Activated CD4-positive, alpha-beta T cell treated with anti-CD3 and anti-CD28 coated beads, Interleukin-2, amount 10 ng/mL, durations not matched to agents 7 days and 5 days (primary cell): ENCODE measurements at regions of chr18 and their contacts with region 1.

Region 1: GRCh38 chr18:48814490-48815178 is 136.1 kb downstream of the SMAD7 start:
- DNase-seq: no peak
- H3K4me3 Mint-ChIP-seq: no peak overlapping the region
- H3K27ac Mint-ChIP-seq: peak overlapping the region; percentile 89
- H3K4me1 Mint-ChIP-seq: peaks cover 41% of the 10 kb centered on the region
- H3K27me3 Mint-ChIP-seq: no peaks in the 10 kb centered on the region

Region 2: DNA sequence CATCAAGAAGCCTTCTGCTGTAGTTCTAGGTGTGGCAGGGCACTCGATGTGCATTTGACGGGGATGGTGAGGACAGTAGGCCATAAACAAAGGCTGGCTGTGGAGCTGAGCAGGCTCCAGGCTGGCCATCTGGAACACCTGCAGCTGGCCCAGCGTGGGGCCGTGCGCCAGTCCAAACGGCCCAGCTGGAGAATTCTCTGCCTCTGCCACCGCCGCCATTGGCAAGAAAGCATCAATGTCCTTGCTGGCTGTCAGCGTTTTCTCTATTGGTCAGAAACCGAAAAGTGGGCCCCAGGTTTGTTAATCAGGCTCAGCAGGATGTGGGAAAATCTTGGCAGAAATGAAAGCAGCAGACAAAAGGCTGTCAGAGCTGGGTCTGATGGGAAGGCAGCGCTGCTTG is 299.8 kb before region 1 on chr18:
- CTCF ChIA-PET with region 1: no interaction called
- POLR2A ChIA-PET with region 1: no interaction called
- DNase-seq: no peak
- H3K4me3 Mint-ChIP-seq: no peak overlapping the region
- H3K27ac Mint-ChIP-seq: no peak overlapping the region
- H3K4me1 Mint-ChIP-seq: no peaks in the 10 kb centered on the region
- H3K27me3 Mint-ChIP-seq: peaks cover 13% of the 10 kb centered on the region

Region 3: GRCh38 chr18:48827291-48828193 is 12.9 kb after region 1 on chr18:
- CTCF ChIA-PET with region 1: interaction called, 11 read pairs
- POLR2A ChIA-PET with region 1: no interaction called
- DNase-seq: no peak
- H3K4me3 Mint-ChIP-seq: no peak overlapping the region
- H3K27ac Mint-ChIP-seq: no peak overlapping the region
- H3K4me1 Mint-ChIP-seq: peaks cover 13% of the 10 kb centered on the region
- H3K27me3 Mint-ChIP-seq: peaks cover 10% of the 10 kb centered on the region

Region 4: DNA sequence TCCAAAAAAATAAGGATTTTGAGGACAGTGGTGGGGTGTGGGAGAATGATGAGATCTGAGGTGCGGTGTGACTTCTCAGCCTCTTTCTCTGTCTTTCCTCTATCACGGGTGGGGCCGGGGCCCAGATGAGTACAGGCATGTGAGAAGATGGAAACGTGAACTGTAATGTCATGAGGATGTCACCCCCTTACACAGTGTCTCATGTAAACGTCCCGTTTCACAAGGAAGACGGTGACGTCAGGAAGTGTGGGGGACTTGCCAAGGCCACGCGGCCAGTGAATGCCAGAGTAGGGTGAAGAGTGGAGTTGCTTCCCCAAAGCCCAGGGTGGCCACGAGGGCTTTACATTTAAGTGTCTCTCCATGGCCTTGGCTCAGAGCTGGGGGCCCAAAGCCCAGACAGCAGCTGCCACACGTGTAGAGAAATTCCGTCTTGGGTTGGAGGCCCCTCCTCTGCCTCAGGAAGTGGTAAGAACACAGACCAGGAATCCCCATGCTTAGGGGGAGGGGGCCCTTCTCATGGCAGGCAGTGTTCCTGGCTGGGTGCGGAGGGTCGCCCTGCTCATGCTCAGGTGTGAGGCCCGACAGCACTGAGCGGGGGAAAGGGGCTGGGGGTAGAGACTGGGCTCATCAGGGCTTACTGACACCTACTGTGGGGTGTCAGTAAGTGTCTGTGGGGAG is 217.0 kb after region 1 on chr18:
- CTCF ChIA-PET with region 1: no interaction called
- POLR2A ChIA-PET with region 1: no interaction called
- DNase-seq: peak; percentile 4
- H3K4me3 Mint-ChIP-seq: no peak overlapping the region
- H3K27ac Mint-ChIP-seq: peak overlapping the region; percentile 1
- H3K4me1 Mint-ChIP-seq: peaks cover 12% of the 10 kb centered on the region
- H3K27me3 Mint-ChIP-seq: peaks cover 11% of the 10 kb centered on the region